ENCODE measurements at regions of chr1 and their contacts with region 1.

Region 1: GRCh38 chr1:205245096-205245495 is 17.4 kb downstream of the TMCC2 start:
- DNase-seq: no peak
- ATAC-seq: no peak
- H3K4me3 Mint-ChIP-seq: no peak overlapping the region
- H3K27ac Mint-ChIP-seq: no peak overlapping the region
- H3K4me1 Mint-ChIP-seq: no peaks in the 10 kb centered on the region
- H3K27me3 Mint-ChIP-seq: no peaks in the 10 kb centered on the region
- CTCF ChIP-seq: no peak

Region 2: DNA sequence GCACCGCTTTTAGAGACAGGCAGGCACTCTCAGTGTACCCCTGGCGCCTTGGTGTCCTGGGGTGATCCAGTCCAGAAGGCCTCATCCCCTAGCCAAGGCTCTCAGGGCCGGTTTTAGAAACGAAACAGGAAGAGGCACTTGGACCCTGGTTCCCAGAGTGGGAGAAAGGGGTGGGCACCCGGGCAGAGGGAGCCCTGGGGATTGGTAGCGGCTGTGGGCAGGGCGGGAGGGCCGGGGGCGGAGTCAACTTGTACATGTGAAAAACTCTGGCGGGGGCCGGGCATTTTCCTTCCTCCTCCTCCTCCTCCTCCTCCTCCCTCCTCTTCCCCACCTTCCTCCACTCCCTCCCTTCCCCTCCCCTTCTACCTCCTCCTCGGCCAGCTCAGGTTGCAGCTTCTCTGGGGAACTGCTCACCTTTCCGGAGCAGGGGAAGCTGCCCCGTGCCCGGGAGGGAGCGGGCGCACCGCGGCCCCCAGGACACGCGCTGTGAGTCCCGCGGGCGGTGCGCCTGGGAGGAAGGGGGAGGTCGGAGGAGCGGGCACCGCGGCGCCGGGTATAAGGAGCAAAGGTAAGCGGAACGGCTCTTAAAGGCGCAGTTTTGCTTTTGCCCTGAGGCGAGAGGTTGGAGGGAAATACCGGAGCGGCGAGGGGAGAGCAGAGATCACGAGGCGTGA is 259.4 kb after region 1 on chr1 and contains the start of gene CDK18:
- CTCF ChIA-PET with region 1: no interaction called
- POLR2A ChIA-PET with region 1: interaction called, 12 read pairs
- intact Hi-C with region 1: no loop called
- DNase-seq: peak; percentile 41
- ATAC-seq: peak; percentile 79
- H3K4me3 Mint-ChIP-seq: peak within 1 kb of the TSS; percentile 81
- H3K27ac Mint-ChIP-seq: no peak within 1 kb of the TSS
- H3K4me1 Mint-ChIP-seq: peaks cover 13% of the 10 kb centered on the region
- H3K27me3 Mint-ChIP-seq: no peaks in the 10 kb centered on the region
- CTCF ChIP-seq: no peak
- total RNA-seq, gene CDK18: 1.9 and 2.6 TPM in 2 replicates

Measured in activated B cell treated with CpG ODN at 0.5 μM for 24 hours (primary cell).